ENCODE measurements at regions of chr15 and their contacts with region 1.

Region 1: DNA sequence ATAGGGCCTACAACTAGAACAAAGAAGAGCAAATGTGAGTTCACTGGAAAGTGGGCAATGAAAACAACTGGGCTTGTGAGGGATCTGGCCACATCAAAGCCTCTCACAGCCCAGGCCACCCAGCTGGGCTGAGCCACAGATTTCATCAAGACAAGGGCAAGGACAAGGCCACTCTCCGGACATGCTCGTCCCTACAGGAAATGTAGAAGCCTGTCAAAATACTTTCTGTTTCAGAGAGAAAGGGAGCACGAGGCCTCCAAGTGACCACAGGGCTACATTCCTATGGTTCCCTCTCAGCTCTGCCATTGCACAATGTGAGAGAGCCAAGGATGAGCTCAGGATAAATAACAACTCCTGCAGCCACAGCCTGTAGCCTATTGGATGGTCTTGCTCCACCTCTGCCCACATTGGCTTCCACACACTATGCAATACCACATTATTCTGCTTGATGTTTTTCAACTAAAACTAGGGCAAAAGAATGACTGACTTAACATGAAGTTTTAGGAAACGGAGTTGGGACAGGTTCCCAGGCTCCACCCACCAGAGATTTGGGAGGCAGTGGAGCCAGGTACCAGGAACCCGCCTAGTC is 12.1 kb downstream of the TBC1D2B start:
- DNase-seq: peak; percentile 97
- H3K4me3 ChIP-seq: peak overlapping the region; percentile 35
- CTCF ChIP-seq: no peak

Region 2: GRCh38 chr15:78049691-78050440 is 15.5 kb before region 1 on chr15:
- CTCF ChIA-PET with region 1: interaction called, 9 read pairs
- POLR2A ChIA-PET with region 1: interaction called, 13 read pairs
- DNase-seq: peak; percentile 96
- H3K4me3 ChIP-seq: no peak overlapping the region
- CTCF ChIP-seq: no peak